GM12878 (cell line): ENCODE measurements at regions of chr1 and their contacts with region 1.

Region 1: GRCh38 chr1:37692078-37692833 is at the start of gene CDCA8:
- DNase-seq: peak; percentile 93
- ATAC-seq: peak; percentile 93
- H3K4me3 ChIP-seq: peak within 1 kb of the TSS; percentile 94
- H3K27ac ChIP-seq: peak within 1 kb of the TSS; percentile 92
- H3K4me1 ChIP-seq: peaks cover 12% of the 10 kb centered on the region
- H3K27me3 ChIP-seq: no peaks in the 10 kb centered on the region
- CTCF ChIP-seq: peak; percentile 70 to 72 (median 71)
- EP300 ChIP-seq: no peak
- POLR2A ChIP-seq: peak; percentile 95
- RAD21 ChIP-seq: no peak
- polyA plus RNA-seq, gene CDCA8: 60.2 to 60.6 TPM

Region 2: GRCh38 chr1:37479255-37480124 is 212.8 kb before region 1 on chr1:
- CTCF ChIA-PET with region 1: interaction called, 3 read pairs
- POLR2A ChIA-PET with region 1: interaction called, 11 read pairs
- RAD21 ChIA-PET with region 1: interaction called, 4 read pairs
- SMC1A ChIA-PET with region 1: interaction called, 6 read pairs
- in situ Hi-C with region 1: no loop called
- intact Hi-C with region 1: loop called (anchors 5 kb)
- DNase-seq: peak; percentile 65
- ATAC-seq: peak; percentile 53
- H3K4me3 ChIP-seq: peak overlapping the region; percentile 99
- H3K27ac ChIP-seq: peak overlapping the region; percentile 99
- H3K4me1 ChIP-seq: peaks cover 22% of the 10 kb centered on the region
- H3K27me3 ChIP-seq: no peaks in the 10 kb centered on the region
- CTCF ChIP-seq: no peak
- EP300 ChIP-seq: 0 out of 4 replicates have a peak, but pooled peaks of 1 of the 2 experiments have one; percentile 7
- POLR2A ChIP-seq: peak; percentile 85
- RAD21 ChIP-seq: no peak

Region 3: GRCh38 chr1:37795321-37796125 is 103.3 kb after region 1 on chr1:
- CTCF ChIA-PET with region 1: no interaction called
- POLR2A ChIA-PET with region 1: no interaction called
- RAD21 ChIA-PET with region 1: no interaction called
- SMC1A ChIA-PET with region 1: no interaction called
- in situ Hi-C with region 1: no loop called
- intact Hi-C with region 1: loop called (anchors 5 kb)
- DNase-seq: no peak
- ATAC-seq: peak; percentile 26; the same call in 1 of the 3 replicates
- H3K4me3 ChIP-seq: peak overlapping the region; percentile 55; the same call in 1 of the 2 replicates
- H3K27ac ChIP-seq: no peak overlapping the region
- H3K4me1 ChIP-seq: peaks cover 17% of the 10 kb centered on the region
- H3K27me3 ChIP-seq: no peaks in the 10 kb centered on the region; a peak in 1 of 4 replicates
- CTCF ChIP-seq: no peak
- EP300 ChIP-seq: no peak
- POLR2A ChIP-seq: no peak
- RAD21 ChIP-seq: no peak

Region 4: GRCh38 chr1:37859507-37860345 is 167.5 kb after region 1 on chr1 and contains the start of gene MTF1:
- CTCF ChIA-PET with region 1: interaction called, 14 read pairs
- POLR2A ChIA-PET with region 1: interaction called, 6 read pairs
- RAD21 ChIA-PET with region 1: interaction called, 17 read pairs
- SMC1A ChIA-PET with region 1: interaction called, 9 read pairs
- in situ Hi-C with region 1: loop called (anchors 5 kb)
- intact Hi-C with region 1: loop called (anchors 2 kb)
- DNase-seq: peak; percentile 84
- ATAC-seq: peak; percentile 99
- H3K4me3 ChIP-seq: peak within 1 kb of the TSS; percentile 96
- H3K27ac ChIP-seq: peak within 1 kb of the TSS; percentile 88
- H3K4me1 ChIP-seq: peaks cover 14% of the 10 kb centered on the region
- H3K27me3 ChIP-seq: no peaks in the 10 kb centered on the region
- CTCF ChIP-seq: peak; percentile 87 to 91 (median 87)
- EP300 ChIP-seq: no peak; a peak in 1 of 4 replicates
- POLR2A ChIP-seq: peak; percentile 90
- RAD21 ChIP-seq: peak; percentile 59
- polyA plus RNA-seq, gene MTF1: 2.8 to 4.4 TPM

Region 5: DNA sequence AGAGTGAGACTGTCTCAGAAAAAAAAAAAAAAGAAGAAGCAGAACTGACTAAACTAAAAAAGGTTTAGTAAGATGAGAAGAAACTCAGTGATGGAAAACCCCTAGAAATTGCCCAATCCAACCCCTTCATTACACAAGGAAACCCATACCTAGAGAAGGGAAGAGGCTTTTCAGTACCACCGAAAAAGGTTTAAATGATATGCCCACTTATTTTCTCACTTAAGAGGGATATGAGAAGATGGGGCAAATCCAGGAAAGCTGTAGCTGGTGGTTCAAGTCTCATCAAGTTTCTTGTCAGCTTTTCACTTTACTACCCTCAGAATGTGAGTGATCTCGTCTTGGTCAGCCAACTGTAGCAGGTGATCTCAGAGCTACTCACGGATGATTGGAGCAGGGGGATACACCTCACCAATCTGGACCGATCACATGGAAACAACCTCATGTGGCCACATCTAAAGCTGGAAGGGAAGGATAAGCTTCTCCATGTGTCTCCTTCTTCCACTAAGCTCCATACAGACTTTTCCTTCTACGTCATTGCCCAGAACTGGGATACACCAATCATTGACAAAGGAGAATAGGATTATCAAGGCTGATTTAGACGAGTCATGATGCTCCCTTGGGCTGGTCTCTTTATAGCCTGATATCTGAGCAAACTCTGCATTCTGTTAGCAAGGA is 481.0 kb after region 1 on chr1:
- CTCF ChIA-PET with region 1: no interaction called
- POLR2A ChIA-PET with region 1: no interaction called
- RAD21 ChIA-PET with region 1: no interaction called
- SMC1A ChIA-PET with region 1: no interaction called
- in situ Hi-C with region 1: no loop called
- intact Hi-C with region 1: loop called (anchors 5 kb)
- DNase-seq: peak; percentile 86
- ATAC-seq: peak; percentile 90
- H3K4me3 ChIP-seq: 0 out of 2 replicates have a peak overlapping the region, but pooled peaks have one; percentile 1
- H3K27ac ChIP-seq: peak overlapping the region; percentile 93
- H3K4me1 ChIP-seq: peaks cover 30% of the 10 kb centered on the region
- H3K27me3 ChIP-seq: no peaks in the 10 kb centered on the region
- CTCF ChIP-seq: no peak
- EP300 ChIP-seq: peak in 1 of 2 experiments; percentile 62; a peak in 2 of 4 replicates
- POLR2A ChIP-seq: no peak
- RAD21 ChIP-seq: 0 out of 2 replicates have a peak, but pooled peaks have one; percentile 8